Activated CD4-positive, alpha-beta T cell treated with anti-CD3 and anti-CD28 coated beads for 36 hours (primary cell): ENCODE measurements at regions of chr12 and their contacts with region 1.

Region 1: GRCh38 chr12:98743347-98743953 is 98.4 kb downstream of the APAF1 start:
- DNase-seq: peak; percentile 75
- ATAC-seq: no peak
- H3K4me3 Mint-ChIP-seq: no peak overlapping the region
- H3K27ac Mint-ChIP-seq: no peak overlapping the region
- H3K4me1 Mint-ChIP-seq: peaks cover 58% of the 10 kb centered on the region
- H3K27me3 Mint-ChIP-seq: peaks cover 18% of the 10 kb centered on the region

Region 2: GRCh38 chr12:98503592-98504367 is 239.7 kb before region 1 on chr12:
- CTCF ChIA-PET with region 1: no interaction called
- POLR2A ChIA-PET with region 1: no interaction called
- intact Hi-C with region 1: loop called in 1 of 2 experiments (anchors 1 kb)
- DNase-seq: peak; percentile 98
- ATAC-seq: peak; percentile 85
- H3K4me3 Mint-ChIP-seq: peak overlapping the region; percentile 84
- H3K27ac Mint-ChIP-seq: peak overlapping the region; percentile 99
- H3K4me1 Mint-ChIP-seq: peaks cover 37% of the 10 kb centered on the region
- H3K27me3 Mint-ChIP-seq: peaks cover 2% of the 10 kb centered on the region

Region 3: DNA sequence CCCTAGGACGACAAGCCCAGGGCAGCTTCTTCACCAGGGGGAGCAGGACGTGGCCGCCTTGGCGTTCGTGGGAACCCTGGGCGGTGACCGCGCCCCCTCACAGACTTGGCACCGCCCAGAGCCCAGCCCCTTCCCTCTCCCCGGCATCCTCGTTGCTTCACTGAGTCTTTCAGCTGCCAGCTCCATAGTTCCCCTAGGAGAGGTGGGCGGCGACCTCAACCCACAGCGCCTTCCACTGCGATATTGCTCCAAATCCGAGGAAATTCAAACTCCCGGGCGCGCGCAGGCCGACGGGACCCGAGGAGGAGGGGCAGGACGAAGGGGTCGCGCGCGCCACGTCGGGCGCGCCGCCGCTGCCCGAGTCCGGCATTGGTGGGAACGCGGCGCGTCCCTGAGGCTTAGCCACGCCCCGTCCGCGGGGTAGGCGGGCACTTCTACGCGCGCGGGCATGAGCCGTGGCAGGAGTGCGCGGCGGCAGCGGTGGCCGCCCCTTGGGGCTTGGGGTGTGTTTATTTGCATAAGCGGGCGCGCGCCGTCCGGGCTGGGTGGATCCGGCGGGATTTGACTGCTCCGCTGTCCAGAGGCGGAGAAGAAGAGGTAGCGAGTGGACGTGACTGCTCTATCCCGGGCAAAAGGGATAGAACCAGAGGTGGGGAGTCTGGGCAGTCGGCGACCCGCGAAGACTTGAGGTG is 98.6 kb before region 1 on chr12 and contains the starts of genes APAF1 and IKBIP:
- CTCF ChIA-PET with region 1: interaction called, 5 read pairs
- POLR2A ChIA-PET with region 1: no interaction called
- intact Hi-C with region 1: loop called (anchors 1 to 5 kb)
- DNase-seq: peak; percentile 98
- ATAC-seq: peak; percentile 92
- H3K4me3 Mint-ChIP-seq: peak within 1 kb of the TSS; percentile 91
- H3K27ac Mint-ChIP-seq: peak within 1 kb of the TSS; percentile 94
- H3K4me1 Mint-ChIP-seq: peaks cover 16% of the 10 kb centered on the region
- H3K27me3 Mint-ChIP-seq: no peaks in the 10 kb centered on the region
- total RNA-seq, gene APAF1: 16.5 to 17.4 TPM
- total RNA-seq, gene IKBIP: 20.1 to 27.0 TPM

Region 4: GRCh38 chr12:98725476-98726247 is 17.8 kb before region 1 on chr12:
- CTCF ChIA-PET with region 1: interaction called, 16 read pairs
- POLR2A ChIA-PET with region 1: interaction called, 5 read pairs
- intact Hi-C with region 1: loop called (anchors 1 kb)
- DNase-seq: peak; percentile 83
- ATAC-seq: peak; percentile 89
- H3K4me3 Mint-ChIP-seq: no peak overlapping the region
- H3K27ac Mint-ChIP-seq: no peak overlapping the region
- H3K4me1 Mint-ChIP-seq: peaks cover 11% of the 10 kb centered on the region
- H3K27me3 Mint-ChIP-seq: no peaks in the 10 kb centered on the region

Region 5: GRCh38 chr12:100142851-100143559 is 1399.6 kb after region 1 on chr12 and contains the start of gene BLTP3B:
- CTCF ChIA-PET with region 1: no interaction called
- POLR2A ChIA-PET with region 1: no interaction called
- intact Hi-C with region 1: loop called in 1 of 2 experiments (anchors 5 kb)
- DNase-seq: peak; percentile 96
- ATAC-seq: peak; percentile 82
- H3K4me3 Mint-ChIP-seq: peak within 1 kb of the TSS; percentile 94
- H3K27ac Mint-ChIP-seq: peak within 1 kb of the TSS; percentile 97
- H3K4me1 Mint-ChIP-seq: peaks cover 33% of the 10 kb centered on the region
- H3K27me3 Mint-ChIP-seq: no peaks in the 10 kb centered on the region
- total RNA-seq, gene BLTP3B: 39.5 to 48.7 TPM